PC-3 (cell line): ENCODE measurements at regions of chr15 and their contacts with region 1.

Region 1: DNA sequence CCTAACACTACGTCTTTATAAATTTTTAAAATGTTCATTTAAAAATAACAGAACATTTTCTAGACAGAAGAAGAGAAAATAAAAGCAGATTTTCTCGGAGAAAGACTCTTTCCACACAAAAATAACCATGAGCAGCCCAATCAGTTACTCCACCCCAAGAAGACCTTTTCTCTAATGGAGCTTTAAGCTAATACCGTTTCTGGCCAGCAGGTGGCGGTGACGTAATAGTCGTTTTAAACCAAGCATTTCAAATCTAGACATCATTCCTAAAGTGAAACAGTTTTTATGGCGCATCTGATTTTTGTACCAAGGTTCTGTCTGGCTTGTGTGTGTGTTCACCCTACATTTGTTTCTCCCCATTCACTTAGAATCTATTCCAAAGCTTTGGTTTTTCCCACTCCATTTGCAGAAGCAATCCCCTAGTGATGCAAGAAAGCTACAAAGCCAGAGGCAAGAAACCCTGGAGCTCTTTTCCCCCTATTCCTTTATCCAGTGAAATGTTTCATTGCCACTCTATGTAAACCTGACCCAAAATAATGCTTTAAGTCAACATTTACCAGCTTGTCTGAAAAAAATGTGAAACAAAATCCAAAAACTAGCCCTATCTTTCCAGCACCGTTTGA is 336.7 kb upstream of the IGF1R start:
- DNase-seq: peak; percentile 86
- ATAC-seq: peak; percentile 27; the same call in 1 of the 2 replicates
- H3K4me3 ChIP-seq: no peak overlapping the region
- H3K27ac ChIP-seq: no peak overlapping the region
- H3K4me1 ChIP-seq: no peaks in the 10 kb centered on the region
- H3K27me3 ChIP-seq: peaks cover 25% of the 10 kb centered on the region
- CTCF ChIP-seq: peak; percentile 88

Region 2: GRCh38 chr15:98421419-98422129 is 109.9 kb after region 1 on chr15:
- CTCF ChIA-PET with region 1: no interaction called
- POLR2A ChIA-PET with region 1: no interaction called
- intact Hi-C with region 1: loop called (anchors 1 kb)
- DNase-seq: peak; percentile 53
- ATAC-seq: peak; percentile 76
- H3K4me3 ChIP-seq: peak overlapping the region; percentile 31; the same call in 1 of the 2 replicates
- H3K27ac ChIP-seq: no peak overlapping the region
- H3K4me1 ChIP-seq: peaks cover 5% of the 10 kb centered on the region
- H3K27me3 ChIP-seq: peaks cover 78% of the 10 kb centered on the region
- CTCF ChIP-seq: peak; percentile 92

Region 3: DNA sequence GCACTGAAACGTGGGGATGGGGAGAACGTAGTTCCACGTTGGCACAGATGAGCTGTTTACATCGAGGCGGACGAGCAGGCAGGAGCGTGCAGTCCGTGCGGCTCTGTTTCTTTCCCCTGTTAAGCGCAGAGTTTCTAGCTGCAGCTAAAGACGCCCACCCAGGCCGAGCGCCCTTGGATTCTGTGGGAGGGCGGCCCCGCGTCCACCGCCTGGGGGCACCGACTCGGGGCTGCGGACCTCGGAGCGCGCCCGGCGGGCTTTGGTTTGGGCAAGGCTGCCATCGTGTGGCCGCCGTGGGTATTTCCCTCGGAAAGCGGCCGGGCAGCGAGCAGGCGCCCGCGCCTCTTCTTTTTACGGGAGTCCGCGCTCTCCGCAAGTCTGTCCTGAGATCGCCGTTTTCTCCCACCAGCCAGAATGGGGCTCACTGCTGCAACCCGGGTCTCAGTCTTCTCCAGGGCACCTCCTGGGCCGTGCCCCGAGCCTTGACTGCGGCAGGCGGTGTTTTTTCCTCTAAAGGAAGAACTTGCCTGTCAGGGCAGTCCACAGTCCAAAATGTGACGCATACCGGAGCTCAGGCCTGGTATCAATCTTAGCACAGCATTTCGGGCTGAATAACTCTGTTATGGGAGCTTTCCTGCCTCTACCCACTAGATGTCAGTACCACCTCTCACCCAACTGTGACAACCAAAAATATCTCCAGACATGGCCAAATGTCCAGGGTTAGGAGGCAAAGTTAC is 116.7 kb after region 1 on chr15:
- CTCF ChIA-PET with region 1: interaction called, 8 read pairs
- POLR2A ChIA-PET with region 1: no interaction called
- intact Hi-C with region 1: loop called (anchors 2 kb)
- DNase-seq: peak; percentile 72
- ATAC-seq: peak; percentile 90
- H3K4me3 ChIP-seq: peak overlapping the region; percentile 64
- H3K27ac ChIP-seq: no peak overlapping the region
- H3K4me1 ChIP-seq: no peaks in the 10 kb centered on the region
- H3K27me3 ChIP-seq: peaks cover 30% of the 10 kb centered on the region
- CTCF ChIP-seq: peak; percentile 59; the same call in 1 of the 2 replicates